MCF 10A (cell line): ENCODE measurements at regions of chr1 and their contacts with region 1.

Region 1: DNA sequence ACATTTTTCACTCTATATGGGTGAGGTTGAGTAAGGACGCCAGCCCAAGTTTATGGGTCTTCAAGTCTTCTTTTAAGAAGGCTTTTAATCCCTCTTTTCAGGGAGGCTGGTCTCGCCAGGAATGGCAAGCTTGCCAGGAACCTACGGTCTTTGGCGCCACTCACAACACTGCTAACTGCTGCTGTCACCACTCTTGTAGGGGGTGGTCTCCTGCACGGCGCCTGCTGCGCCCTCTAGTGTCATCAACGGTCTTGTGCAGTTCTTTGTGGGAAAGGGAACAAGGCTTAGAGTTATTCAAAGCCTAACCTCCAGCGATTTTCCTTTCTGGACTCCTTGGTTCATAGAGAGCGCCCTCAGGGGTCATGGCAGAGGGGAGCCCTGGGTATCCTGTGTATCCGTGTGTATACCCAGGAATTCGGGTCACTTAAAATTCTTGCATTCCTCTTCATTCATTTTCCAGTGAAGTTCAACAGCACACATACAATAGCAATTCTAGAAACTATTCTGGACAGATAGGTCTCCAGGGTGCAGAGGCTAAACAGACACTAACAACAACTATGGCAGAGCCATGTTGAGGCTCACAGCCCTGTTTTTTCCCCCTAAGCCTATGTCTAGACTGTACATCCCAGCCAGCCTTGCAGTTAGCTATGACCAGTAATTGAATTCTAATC is 392.8 kb upstream of the CAMK1G start:
- DNase-seq: peak; percentile 85
- H3K4me3 Mint-ChIP-seq: no peak overlapping the region
- H3K27ac Mint-ChIP-seq: no peak overlapping the region
- H3K4me1 Mint-ChIP-seq: no peaks in the 10 kb centered on the region
- H3K27me3 Mint-ChIP-seq: no peaks in the 10 kb centered on the region
- CTCF ChIP-seq: peak; percentile 96

Region 2: DNA sequence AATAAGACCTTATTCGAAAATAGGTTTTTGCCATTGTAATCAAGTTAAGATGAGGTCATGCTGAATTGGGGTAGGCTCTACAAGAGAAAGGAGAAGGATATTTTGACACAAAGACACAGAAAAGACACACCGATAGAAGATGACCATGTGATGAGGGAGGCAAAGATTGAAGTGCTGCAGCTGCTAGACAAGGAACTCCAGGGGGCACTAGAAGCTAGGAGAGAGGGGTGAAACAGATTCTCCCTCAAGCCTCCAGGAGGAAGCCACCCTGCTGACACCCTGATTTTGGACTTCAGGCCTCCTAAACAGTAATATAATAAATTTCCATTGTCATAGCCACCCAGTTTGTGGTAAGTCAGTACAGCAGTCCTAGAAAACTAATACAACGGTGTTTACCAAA is 114.0 kb before region 1 on chr1:
- CTCF ChIA-PET with region 1: no interaction called
- POLR2A ChIA-PET with region 1: no interaction called
- intact Hi-C with region 1: loop called (anchors 1 kb)
- DNase-seq: peak; percentile 84
- H3K4me3 Mint-ChIP-seq: no peak overlapping the region
- H3K27ac Mint-ChIP-seq: no peak overlapping the region
- H3K4me1 Mint-ChIP-seq: peaks cover 15% of the 10 kb centered on the region
- H3K27me3 Mint-ChIP-seq: no peaks in the 10 kb centered on the region
- CTCF ChIP-seq: peak; percentile 68

Region 3: DNA sequence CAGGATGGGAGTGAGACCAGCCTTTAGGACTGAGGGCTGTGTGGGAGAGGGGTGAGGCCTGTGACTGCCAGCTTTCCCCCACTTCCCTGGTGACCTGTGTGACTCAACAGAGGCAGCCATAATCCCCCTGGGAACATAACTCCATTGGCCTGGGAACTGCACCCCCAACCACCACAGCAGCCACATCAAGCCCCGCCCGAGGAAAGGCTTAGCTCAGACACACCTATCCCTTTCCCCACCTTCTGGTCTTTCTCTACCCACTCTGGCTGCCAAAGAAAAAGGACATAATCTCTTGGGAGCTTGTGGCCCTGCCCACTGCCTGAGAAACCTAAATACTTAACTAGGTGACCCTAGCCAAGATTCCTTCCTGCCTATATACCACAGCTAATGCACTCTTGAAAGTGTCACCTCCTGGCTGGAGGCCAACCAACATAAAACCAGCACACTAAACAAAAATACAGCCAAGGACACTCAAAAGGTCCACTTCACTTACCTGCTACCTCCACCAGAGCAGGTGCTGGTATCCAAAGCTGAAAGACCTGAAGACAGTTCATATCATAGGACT is 13.8 kb before region 1 on chr1:
- CTCF ChIA-PET with region 1: interaction called, 11 read pairs
- POLR2A ChIA-PET with region 1: no interaction called
- intact Hi-C with region 1: no loop called
- DNase-seq: no peak
- H3K4me3 Mint-ChIP-seq: no peak overlapping the region
- H3K27ac Mint-ChIP-seq: no peak overlapping the region
- H3K4me1 Mint-ChIP-seq: peaks cover 7% of the 10 kb centered on the region
- H3K27me3 Mint-ChIP-seq: peaks cover 27% of the 10 kb centered on the region
- CTCF ChIP-seq: no peak